BJ (cell line): ENCODE measurements at regions of chr6 and their contacts with region 1.

Region 1: DNA sequence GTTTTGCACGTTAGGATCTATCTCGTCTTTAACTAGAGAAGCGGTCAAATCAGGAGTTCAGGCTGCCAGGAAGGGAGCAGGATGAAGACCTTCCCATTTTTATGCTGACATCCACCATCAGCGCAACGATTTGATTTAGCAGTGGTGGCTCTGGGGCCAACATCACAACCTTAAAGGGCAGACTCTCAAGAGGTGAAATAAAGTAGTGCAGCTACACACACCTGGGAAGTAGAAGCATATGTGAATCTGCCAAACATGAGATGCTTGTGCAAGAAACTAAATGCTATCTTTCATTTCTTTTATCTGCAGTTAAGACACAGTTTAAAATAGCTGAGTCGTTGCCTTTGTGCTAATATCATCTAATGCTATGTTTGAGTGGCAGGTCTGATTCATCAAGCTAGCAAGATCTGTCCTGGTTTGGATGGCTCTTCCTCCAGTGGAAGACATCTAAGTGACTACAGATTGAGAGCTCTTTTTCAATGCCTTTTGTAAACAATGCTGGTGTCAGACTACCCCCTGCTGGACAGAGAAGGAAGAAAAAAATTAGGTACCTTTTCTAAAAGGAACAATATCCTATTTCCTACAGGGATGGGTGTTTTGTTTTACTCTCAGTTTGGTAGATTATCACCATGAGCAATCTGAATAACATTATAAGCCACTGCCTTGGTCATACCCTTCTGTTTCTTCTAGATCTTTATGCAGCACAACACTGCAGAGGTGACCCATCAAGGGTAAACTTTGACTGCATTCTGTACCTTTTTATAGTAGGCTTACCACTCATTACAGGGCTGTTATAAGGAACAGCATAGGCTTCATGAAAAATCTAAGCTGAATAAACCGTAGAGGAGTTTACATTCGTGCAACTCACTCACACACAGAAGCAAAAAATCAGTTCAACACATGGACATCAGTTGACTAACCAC is 171.6 kb upstream of the FBXL4 start:
- DNase-seq: no peak
- H3K4me3 ChIP-seq: no peak overlapping the region
- H3K27me3 ChIP-seq: no peaks in the 10 kb centered on the region
- CTCF ChIP-seq: peak; percentile 63

Region 2: GRCh38 chr6:97497713-97498331 is 1621.5 kb before region 1 on chr6:
- CTCF ChIA-PET with region 1: interaction called, 10 read pairs
- POLR2A ChIA-PET with region 1: no interaction called
- DNase-seq: no peak
- H3K4me3 ChIP-seq: no peak overlapping the region
- H3K27me3 ChIP-seq: no peaks in the 10 kb centered on the region
- CTCF ChIP-seq: peak; percentile 88

Region 3: GRCh38 chr6:99130897-99131873 is 11.8 kb after region 1 on chr6:
- CTCF ChIA-PET with region 1: interaction called, 12 read pairs
- POLR2A ChIA-PET with region 1: no interaction called
- DNase-seq: no peak
- H3K4me3 ChIP-seq: no peak overlapping the region
- H3K27me3 ChIP-seq: no peaks in the 10 kb centered on the region
- CTCF ChIP-seq: 0 out of 2 replicates have a peak, but pooled peaks have one; percentile 6